ENCODE measurements at regions of chr22 and their contacts with region 1.

Region 1: GRCh38 chr22:37043828-37044538 is 7.6 kb upstream of the KCTD17 start:
- DNase-seq: peak; percentile 83
- H3K4me3 ChIP-seq: no peak overlapping the region
- H3K27ac ChIP-seq: no peak overlapping the region
- H3K4me1 ChIP-seq: no peaks in the 10 kb centered on the region
- CTCF ChIP-seq: peak; percentile 82

Region 2: DNA sequence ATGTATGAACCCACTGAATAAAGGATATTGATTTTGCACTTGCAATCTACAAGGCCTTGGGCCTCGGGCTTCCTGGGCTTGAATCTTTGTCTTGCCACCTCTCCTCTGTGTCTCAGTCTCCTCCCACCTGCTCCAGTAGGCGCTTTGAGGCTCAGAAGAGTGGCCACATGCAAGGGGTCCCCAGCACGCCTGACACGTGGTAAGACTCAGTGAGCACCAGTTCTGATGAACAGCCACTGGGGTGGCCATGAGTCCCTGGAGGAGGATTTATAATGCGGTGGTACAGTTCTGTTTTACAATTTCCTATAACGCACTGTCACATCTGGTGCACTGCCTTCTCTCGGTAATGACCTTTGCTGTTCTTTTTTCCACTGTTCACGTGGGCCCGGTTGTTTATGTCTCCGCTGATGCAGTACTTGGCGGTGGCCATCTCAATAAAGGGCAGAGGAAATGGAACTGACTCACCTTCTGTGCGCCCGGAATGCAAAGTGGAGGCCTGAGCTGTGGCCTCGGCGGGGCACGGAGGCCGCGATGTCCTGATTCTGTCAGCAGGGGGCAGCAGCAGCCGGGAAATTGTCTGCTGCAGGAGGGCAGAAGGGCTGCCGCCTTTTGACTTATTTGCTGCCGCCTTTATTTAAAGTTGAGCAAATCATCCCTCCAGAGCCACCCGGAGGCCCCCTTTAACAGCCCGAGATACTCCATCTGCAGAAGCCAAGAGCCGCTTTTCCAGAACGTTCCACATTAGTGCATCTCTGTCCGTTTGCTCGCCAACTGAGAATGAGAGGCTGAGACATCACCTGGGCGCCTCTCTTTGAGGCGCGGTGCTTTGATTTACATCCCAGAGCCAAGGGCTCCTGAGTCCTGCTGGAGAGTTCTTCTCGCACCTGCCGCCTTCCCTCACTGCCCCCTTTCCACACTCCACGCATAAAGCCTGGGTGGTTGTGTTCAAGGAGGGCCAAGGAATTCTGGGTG is 262.0 kb before region 1 on chr22:
- CTCF ChIA-PET with region 1: interaction called, 3 read pairs
- POLR2A ChIA-PET with region 1: no interaction called
- intact Hi-C with region 1: loop called (anchors 2 kb)
- DNase-seq: peak; percentile 80
- H3K4me3 ChIP-seq: no peak overlapping the region
- H3K27ac ChIP-seq: no peak overlapping the region
- H3K4me1 ChIP-seq: peaks cover 6% of the 10 kb centered on the region
- CTCF ChIP-seq: peak; percentile 97

Region 3: GRCh38 chr22:37007651-37008050 is 36.3 kb before region 1 on chr22:
- CTCF ChIA-PET with region 1: no interaction called
- POLR2A ChIA-PET with region 1: no interaction called
- intact Hi-C with region 1: no loop called
- DNase-seq: no peak
- H3K4me3 ChIP-seq: no peak overlapping the region
- H3K27ac ChIP-seq: no peak overlapping the region
- H3K4me1 ChIP-seq: no peaks in the 10 kb centered on the region
- CTCF ChIP-seq: no peak

Region 4: DNA sequence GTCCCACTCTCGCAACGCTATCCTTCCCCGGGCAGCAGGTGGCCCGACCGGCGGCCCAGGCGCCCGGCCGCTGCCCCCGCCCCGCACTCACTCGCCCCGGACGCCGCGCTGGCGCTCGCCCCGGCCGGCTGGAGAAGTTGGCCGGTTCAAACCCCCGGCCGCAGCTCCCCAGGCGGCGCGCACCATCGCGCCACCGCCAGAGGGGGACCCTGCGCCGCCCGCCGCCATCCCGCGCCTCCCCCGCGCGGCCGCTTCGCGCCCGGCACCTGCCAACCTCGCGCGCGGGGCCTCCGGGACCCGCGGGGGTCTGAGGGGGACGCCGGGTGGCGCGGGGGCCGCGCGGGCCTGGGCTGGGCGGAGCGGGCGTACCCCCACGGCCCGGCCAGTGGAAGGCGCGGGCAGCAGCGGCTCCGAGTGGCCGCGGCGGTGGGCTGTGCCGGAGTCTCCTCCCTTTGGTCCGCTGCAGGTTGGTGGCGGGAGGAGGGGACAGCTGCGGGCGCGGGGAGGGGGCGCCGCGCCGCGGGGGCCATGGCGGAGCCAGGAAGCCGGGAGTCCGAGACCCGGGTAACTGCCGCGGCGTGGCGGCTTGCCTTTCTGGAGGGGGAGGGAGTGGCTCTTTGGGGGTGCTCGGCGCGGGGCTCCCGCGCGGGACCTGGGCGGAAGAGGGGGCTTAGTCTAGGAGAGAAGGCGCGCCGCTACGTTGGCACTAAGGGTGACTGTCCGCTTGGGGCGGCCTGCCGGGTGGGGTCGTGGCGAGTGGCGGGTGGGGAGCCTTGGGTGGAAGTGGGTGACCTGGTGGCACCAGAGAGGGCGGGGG is 24.5 kb before region 1 on chr22 and contains the starts of genes MPST and TST:
- CTCF ChIA-PET with region 1: interaction called, 10 read pairs
- POLR2A ChIA-PET with region 1: interaction called, 3 read pairs
- intact Hi-C with region 1: no loop called
- DNase-seq: peak; percentile 86
- H3K4me3 ChIP-seq: peak within 1 kb of the TSS; percentile 90
- H3K27ac ChIP-seq: peak within 1 kb of the TSS; percentile 46
- H3K4me1 ChIP-seq: peaks cover 13% of the 10 kb centered on the region
- CTCF ChIP-seq: peak; percentile 24; the same call in 1 of the 2 replicates
- total RNA-seq, gene MPST: 105 and 124 TPM in 2 replicates
- total RNA-seq, gene TST: 36.0 and 37.6 TPM in 2 replicates

Region 5: GRCh38 chr22:37089434-37089833 is 45.5 kb after region 1 on chr22:
- CTCF ChIA-PET with region 1: no interaction called
- POLR2A ChIA-PET with region 1: no interaction called
- intact Hi-C with region 1: no loop called
- DNase-seq: no peak
- H3K4me3 ChIP-seq: no peak overlapping the region
- H3K27ac ChIP-seq: no peak overlapping the region
- H3K4me1 ChIP-seq: no peaks in the 10 kb centered on the region
- CTCF ChIP-seq: no peak

Region 6: DNA sequence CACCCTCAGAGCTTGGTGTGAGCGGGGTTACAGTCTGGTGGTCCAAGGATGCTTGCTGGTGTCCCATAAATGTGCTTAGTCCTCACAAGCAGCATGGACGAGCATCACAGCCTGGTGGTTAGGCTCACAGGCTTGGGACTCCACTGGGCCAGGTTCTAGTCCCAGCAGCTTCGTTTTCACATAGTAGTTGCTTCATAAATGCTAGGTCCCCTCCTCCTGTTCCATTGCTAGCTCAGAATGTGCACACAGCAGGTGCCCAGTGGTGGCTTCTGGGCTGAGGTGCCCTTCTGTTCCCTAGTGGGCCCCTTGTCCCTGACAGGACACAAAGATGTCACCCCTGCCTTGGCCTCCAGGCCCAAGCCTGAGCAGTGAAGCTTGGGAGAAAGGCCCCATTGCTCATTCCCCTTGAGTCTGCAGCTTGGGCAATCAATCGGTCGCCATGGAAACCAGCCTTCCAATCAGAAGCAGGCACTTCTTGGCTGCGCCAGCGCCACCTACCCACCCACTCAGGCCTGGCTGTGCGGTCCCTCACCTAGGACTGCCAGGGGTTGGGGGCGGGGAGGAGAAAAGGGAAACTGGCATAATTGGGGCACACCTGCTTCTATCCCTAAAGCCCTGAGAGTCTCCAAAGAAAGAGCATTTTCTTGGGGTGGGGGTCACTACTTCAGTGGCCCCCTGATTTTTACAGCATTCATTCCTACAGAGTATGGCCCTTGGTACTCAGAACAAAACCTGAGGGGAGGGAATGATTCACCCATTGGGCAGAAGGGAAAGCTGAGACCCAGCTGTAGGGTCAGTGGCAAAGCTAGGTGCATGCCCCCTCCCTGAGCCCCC is 286.4 kb after region 1 on chr22:
- CTCF ChIA-PET with region 1: no interaction called
- POLR2A ChIA-PET with region 1: no interaction called
- intact Hi-C with region 1: no loop called
- DNase-seq: peak; percentile 87
- H3K4me3 ChIP-seq: no peak overlapping the region
- H3K27ac ChIP-seq: no peak overlapping the region
- H3K4me1 ChIP-seq: peaks cover 22% of the 10 kb centered on the region
- CTCF ChIP-seq: peak; percentile 73

Measured in OCI-LY7 (cell line).